Astrocyte of the cerebellum (primary cell): ENCODE measurements at regions of chr14 and their contacts with region 1.

Region 1: GRCh38 chr14:54889919-54890318 is 12.7 kb downstream of the GCH1 start:
- DNase-seq: no peak
- H3K4me3 ChIP-seq: no peak overlapping the region
- CTCF ChIP-seq: no peak

Region 2: DNA sequence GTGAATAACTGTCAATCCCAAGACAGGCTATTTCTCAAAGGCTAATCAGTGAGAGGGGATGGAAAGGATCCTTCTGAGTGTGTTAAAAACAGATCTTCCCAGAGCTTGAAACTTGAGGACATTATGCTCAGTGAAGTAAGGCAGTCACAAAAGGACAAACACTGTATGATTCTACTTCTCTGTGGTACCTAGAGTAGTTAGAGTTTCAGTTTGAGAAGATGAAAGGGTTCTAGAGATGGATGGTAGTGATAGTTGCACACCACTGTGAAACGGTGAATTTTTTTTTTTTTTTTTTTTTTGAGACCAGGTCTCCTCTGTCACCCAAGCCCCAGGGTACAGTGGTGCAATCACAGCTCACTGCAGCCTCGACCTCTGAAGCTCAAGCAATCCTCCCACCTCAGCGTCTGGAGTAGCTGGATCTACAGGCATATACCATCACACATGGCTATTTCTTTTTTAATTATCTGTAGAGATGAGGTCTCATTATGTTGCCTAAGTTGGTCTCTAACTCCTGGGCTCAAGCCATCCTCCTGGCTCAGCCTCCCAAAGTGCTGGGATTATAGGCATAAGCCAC is 189.1 kb before region 1 on chr14:
- in situ Hi-C with region 1: no loop called
- DNase-seq: no peak
- H3K4me3 ChIP-seq: no peak overlapping the region
- CTCF ChIP-seq: no peak

Region 3: GRCh38 chr14:54818201-54819133 is 71.5 kb before region 1 on chr14:
- in situ Hi-C with region 1: loop called (anchors 5 kb)
- DNase-seq: peak; percentile 85
- H3K4me3 ChIP-seq: no peak overlapping the region
- CTCF ChIP-seq: no peak

Region 4: GRCh38 chr14:54955143-54955542 is 65.2 kb after region 1 on chr14:
- in situ Hi-C with region 1: no loop called
- DNase-seq: no peak
- H3K4me3 ChIP-seq: no peak overlapping the region
- CTCF ChIP-seq: no peak